ENCODE measurements at regions of chr7 and their contacts with region 1.

Region 1: GRCh38 chr7:76291343-76292212 is 10.9 kb upstream of the HSPB1 start:
- DNase-seq: peak; percentile 87 to 93 (median 92)
- ATAC-seq: peak; percentile 89
- H3K4me3 ChIP-seq: peak overlapping the region; percentile 3 to 24
- H3K27ac ChIP-seq: peak overlapping the region; percentile 83 to 99
- H3K4me1 ChIP-seq: peaks cover 41 to 56% of the 10 kb centered on the region in 2 donors
- H3K27me3 ChIP-seq: no peaks in the 10 kb centered on the region
- CTCF ChIP-seq: peak; percentile 94 to 99

Region 2: GRCh38 chr7:76047811-76048667 is 243.5 kb before region 1 on chr7 and contains the starts of genes MDH2 and STYXL1:
- intact Hi-C with region 1: no loop called
- DNase-seq: peak; percentile 94 to 97 (median 96)
- ATAC-seq: peak; percentile 96
- H3K4me3 ChIP-seq: peak within 1 kb of the TSS; percentile 88 to 99
- H3K27ac ChIP-seq: peak within 1 kb of the TSS; percentile 89 to 94
- H3K4me1 ChIP-seq: peaks cover 5 to 43% of the 10 kb centered on the region in 2 donors
- H3K27me3 ChIP-seq: no peaks in the 10 kb centered on the region
- CTCF ChIP-seq: peak in 1 of 2 donors; percentile 23
- polyA plus RNA-seq, gene MDH2: 138 to 180 (median 155) TPM
- polyA plus RNA-seq, gene STYXL1: 33.3 to 49.5 (median 37.7) TPM

Region 3: DNA sequence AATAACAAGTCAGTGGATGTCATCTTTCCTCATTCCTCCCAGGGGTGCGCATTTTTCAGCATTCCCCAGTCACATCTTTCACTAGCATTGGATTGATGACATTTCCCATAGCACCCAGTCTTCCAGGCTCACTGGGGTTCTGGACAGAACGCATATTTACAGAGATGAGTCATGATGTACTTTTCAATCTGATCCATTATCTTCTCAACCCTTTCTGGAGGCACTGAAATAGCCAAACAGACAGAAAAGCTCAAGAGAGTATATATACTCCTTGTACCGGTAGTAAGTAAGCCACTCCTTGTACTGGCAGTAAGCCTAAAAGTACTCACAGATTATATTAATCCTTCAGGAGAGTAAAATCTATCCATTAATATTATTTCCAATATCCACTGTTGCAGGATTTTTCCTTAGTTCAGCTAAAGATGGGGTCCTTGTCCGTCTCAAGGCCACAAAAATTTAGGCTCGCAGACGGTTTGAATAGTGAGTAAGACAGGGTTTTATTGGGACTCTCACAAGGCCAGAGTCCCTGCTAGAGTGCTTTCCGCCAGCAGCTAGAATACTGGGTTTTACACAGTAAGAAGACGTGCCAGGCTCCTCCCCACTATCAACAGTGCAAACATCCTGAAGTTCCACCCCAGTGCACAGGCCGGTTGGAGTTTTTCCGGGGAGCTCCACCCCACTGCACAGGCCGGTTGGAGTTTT is 182.9 kb before region 1 on chr7:
- intact Hi-C with region 1: no loop called
- DNase-seq: peak in 2 of 4 donors; percentile 16 to 62
- ATAC-seq: peak; percentile 98
- H3K4me3 ChIP-seq: no peak overlapping the region
- H3K27ac ChIP-seq: peak overlapping the region in 1 of 2 donors; percentile 44
- H3K4me1 ChIP-seq: no peaks in the 10 kb centered on the region
- H3K27me3 ChIP-seq: no peaks in the 10 kb centered on the region
- CTCF ChIP-seq: no peak

Region 4: GRCh38 chr7:76314042-76314721 is 22.6 kb after region 1 on chr7:
- intact Hi-C with region 1: loop called in 1 of 2 experiments (anchors 2 kb)
- DNase-seq: peak; percentile 90 to 98 (median 96)
- ATAC-seq: peak; percentile 87
- H3K4me3 ChIP-seq: no peak overlapping the region
- H3K27ac ChIP-seq: peak overlapping the region in 1 of 2 donors; percentile 39
- H3K4me1 ChIP-seq: peaks cover 0 to 14% of the 10 kb centered on the region in 2 donors
- H3K27me3 ChIP-seq: no peaks in the 10 kb centered on the region
- CTCF ChIP-seq: peak; percentile 99 to 100

Measured in left lung (tissue), 14 donors.